AG04449 (cell line): ENCODE measurements at regions of chr15 and their contacts with region 1.

Region 1: DNA sequence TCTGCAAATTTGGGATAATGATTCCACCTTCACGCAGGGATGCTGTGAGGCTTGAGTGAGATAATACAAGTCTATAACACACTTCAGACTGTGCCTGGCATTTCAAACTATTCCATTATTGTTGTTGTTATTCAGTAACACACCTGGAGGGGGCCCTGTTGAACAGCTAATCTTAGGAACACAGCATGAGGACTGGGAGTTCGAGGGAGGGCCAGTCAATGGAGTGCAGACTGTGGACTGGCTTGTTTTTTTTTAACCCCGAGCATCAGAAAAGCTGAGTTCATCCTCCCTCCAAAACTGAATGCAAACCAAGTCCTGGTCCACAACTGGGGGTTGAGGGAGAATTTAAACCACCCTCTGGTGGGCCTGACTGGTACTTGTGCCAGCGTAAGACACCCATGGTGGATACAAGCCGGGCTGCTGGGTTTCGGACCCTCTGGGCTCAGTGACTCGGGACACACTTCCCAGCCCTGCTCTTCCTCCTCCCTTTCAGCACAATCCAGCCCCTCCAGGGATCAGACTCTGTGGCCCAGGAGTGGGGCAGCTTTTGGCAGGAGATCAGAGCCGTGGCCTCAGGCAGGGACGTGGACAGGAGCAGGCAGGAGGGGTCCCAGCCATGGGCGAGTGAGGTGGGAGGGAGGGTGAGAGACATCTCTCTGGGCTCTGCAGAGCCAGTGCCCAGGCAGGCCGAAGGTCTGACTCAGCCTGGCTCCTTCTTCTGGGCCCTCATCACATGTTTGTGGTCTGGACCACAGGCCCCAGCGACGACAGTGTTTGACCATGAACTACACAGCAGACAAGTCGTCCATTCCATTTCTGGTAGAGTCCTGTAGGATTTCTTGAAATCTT is 36.3 kb upstream of the MEX3B start:
- DNase-seq: peak; percentile 93
- H3K4me3 ChIP-seq: no peak overlapping the region
- CTCF ChIP-seq: peak; percentile 29

Region 2: DNA sequence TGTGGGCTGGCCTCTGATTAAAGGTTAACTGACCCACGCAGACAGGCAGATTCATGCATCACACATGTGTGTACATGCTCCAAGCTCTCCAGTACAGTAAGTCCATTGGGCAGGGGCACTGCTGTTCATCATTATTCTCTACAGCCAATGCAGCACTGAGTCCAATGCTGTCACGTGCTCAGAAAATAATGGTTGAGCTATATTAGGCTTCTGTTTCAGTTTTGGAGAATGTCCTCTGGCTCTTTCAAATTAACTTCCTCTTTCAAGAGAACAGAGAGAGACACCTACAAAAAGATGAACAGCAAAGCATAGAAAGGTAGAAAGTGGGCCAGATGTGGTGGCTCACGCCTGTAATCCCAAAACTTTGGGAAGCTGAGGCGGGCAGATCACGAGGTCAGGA is 238.9 kb before region 1 on chr15:
- CTCF ChIA-PET with region 1: no interaction called
- POLR2A ChIA-PET with region 1: no interaction called
- DNase-seq: no peak
- H3K4me3 ChIP-seq: no peak overlapping the region
- CTCF ChIP-seq: no peak

Region 3: DNA sequence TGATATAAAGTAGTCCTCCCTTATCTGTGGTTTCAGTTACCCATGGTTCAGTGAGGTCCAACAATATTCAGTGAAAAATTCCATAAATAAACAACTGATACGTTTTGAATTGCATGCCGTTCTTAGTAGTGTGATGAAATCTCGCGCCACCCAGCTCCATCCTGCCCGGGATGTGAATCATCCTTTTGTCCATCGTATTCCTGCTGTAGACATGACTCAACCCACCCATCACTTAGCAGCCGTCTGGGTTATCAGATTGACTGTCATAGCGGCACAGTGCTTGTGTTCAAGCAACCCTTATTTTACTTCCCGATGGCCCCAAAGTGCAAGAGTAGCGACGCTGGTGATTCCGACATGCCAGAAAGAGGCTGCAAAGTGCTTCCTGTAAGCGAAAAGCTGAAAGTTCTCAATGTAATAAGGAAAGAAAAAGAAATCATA is 11.7 kb after region 1 on chr15:
- CTCF ChIA-PET with region 1: interaction called, 18 read pairs
- POLR2A ChIA-PET with region 1: interaction called, 3 read pairs
- DNase-seq: peak; percentile 86
- H3K4me3 ChIP-seq: peak overlapping the region; percentile 43
- CTCF ChIP-seq: no peak